Endothelial cell of umbilical vein (primary cell): ENCODE measurements at regions of chr17 and their contacts with region 1.

Region 1: DNA sequence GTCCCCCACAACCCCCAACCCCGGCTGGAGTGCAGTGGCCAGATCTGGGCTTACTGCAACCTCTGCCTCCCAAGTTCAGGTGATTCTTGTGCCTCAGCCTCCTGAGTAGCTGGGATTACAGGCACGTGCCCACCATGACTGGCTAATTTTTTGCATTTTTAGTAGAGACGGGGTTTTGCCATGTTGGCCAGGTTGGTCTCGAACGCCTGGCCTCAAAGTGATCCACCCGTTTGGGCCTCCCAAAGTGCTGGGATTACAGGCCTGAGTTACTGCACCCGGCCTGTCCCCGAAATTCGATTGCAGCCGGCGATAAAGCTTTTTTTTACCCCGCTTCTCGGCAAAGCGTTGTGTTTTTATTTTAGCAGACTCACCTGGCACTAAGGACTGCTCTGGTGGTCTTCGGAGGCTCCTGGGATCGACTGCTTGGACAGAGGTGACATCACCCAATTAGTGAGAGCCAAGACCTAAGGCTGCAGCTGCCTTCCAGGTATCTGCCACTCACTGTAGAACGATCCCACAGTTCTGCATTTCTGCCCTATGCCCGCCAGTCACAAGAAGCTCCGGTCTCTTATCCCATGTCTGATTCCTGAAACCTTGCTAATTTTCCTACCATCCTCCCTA is 82.2 kb upstream of the ARL4D start:
- DNase-seq: no peak
- H3K4me3 ChIP-seq: no peak overlapping the region
- H3K27ac ChIP-seq: no peak overlapping the region
- H3K4me1 ChIP-seq: no peaks in the 10 kb centered on the region
- H3K27me3 ChIP-seq: no peaks in the 10 kb centered on the region
- CTCF ChIP-seq: no peak
- POLR2A ChIP-seq: no peak

Region 2: GRCh38 chr17:43094129-43094835 is 222.3 kb before region 1 on chr17:
- CTCF ChIA-PET with region 1: no interaction called
- POLR2A ChIA-PET with region 1: no interaction called
- dilution Hi-C with region 1: no loop called
- intact Hi-C with region 1: no loop called
- DNase-seq: no peak
- H3K4me3 ChIP-seq: no peak overlapping the region
- H3K27ac ChIP-seq: no peak overlapping the region
- H3K4me1 ChIP-seq: no peaks in the 10 kb centered on the region
- H3K27me3 ChIP-seq: no peaks in the 10 kb centered on the region
- CTCF ChIP-seq: no peak
- POLR2A ChIP-seq: no peak

Region 3: DNA sequence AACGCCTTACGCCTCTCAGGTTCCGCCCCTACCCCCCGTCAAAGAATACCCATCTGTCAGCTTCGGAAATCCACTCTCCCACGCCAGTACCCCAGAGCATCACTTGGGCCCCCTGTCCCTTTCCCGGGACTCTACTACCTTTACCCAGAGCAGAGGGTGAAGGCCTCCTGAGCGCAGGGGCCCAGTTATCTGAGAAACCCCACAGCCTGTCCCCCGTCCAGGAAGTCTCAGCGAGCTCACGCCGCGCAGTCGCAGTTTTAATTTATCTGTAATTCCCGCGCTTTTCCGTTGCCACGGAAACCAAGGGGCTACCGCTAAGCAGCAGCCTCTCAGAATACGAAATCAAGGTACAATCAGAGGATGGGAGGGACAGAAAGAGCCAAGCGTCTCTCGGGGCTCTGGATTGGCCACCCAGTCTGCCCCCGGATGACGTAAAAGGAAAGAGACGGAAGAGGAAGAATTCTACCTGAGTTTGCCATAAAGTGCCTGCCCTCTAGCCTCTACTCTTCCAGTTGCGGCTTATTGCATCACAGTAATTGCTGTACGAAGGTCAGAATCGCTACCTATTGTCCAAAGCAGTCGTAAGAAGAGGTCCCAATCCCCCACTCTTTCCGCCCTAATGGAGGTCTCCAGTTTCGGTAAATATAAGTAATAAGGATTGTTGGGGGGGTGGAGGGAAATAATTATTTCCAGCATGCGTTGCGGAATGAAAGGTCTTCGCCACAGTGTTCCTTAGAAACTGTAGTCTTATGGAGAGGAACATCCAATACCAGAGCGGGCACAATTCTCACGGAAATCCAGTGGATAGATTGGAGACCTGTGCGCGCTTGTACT is 191.3 kb before region 1 on chr17 and contains the start of gene BRCA1:
- CTCF ChIA-PET with region 1: no interaction called
- POLR2A ChIA-PET with region 1: no interaction called
- dilution Hi-C with region 1: no loop called
- intact Hi-C with region 1: loop called (anchors 1 kb)
- DNase-seq: peak; percentile 98
- H3K4me3 ChIP-seq: peak within 1 kb of the TSS; percentile 64 to 92 (median 86)
- H3K27ac ChIP-seq: peak within 1 kb of the TSS; percentile 67
- H3K4me1 ChIP-seq: peaks cover 14% of the 10 kb centered on the region
- H3K27me3 ChIP-seq: no peaks in the 10 kb centered on the region
- CTCF ChIP-seq: no peak
- POLR2A ChIP-seq: peak; percentile 69
- total RNA-seq, gene BRCA1: 25.7 and 29.0 TPM in 2 replicates

Region 4: GRCh38 chr17:43170766-43171585 is 145.7 kb before region 1 on chr17 and contains the start of gene NBR1:
- CTCF ChIA-PET with region 1: no interaction called
- POLR2A ChIA-PET with region 1: interaction called, 22 read pairs
- dilution Hi-C with region 1: no loop called
- intact Hi-C with region 1: loop called (anchors 1 kb)
- DNase-seq: peak; percentile 99
- H3K4me3 ChIP-seq: peak within 1 kb of the TSS; percentile 47 to 75 (median 73)
- H3K27ac ChIP-seq: peak within 1 kb of the TSS; percentile 68
- H3K4me1 ChIP-seq: peaks cover 22% of the 10 kb centered on the region
- H3K27me3 ChIP-seq: no peaks in the 10 kb centered on the region
- CTCF ChIP-seq: no peak
- POLR2A ChIP-seq: peak; percentile 64
- total RNA-seq, gene NBR1: 52.1 and 57.0 TPM in 2 replicates

Region 5: DNA sequence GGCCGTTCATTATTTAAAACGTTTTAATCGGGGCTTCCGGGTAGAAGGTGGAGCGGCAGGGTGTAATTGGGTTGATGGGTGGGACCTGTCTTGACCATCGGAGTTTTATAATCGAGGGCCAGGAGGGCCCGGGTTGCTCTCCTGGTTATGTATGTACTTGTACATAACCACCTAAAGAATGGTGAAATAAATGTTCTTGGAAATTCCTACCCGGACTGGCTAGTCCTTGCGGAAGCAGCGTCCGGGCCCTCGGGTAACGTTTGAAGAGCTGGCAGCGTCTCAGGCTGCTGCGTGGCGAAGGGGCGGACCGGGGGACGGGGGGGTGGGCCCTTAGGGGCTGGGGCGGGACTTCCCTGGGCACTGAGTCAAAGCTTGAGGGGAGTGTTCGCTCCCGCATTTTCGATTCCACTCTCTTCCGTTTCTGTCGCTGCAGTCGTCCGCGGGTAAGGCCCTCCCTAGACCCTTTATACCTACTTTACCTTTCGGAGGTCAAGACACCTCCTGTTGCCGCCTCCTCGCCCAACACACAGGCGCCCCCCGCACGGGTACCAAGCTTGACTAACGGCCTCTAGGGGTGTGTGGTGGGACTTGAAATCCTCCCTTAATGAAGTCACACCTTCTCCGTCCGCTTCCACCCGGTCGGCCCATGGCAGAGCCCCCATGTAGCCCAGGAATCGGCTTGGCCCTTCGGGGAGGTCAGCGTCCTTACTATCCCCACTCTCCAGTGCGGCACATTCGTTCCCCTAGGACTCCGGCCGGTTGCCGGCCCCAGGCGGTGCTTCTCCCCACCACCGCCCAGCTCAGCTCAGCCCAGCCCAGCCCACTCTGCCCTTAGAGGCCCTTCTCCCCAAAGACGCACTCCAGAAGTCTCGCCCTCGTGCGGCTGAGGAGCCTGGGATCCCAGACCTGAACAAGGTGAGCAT is 104.9 kb before region 1 on chr17 and contains the start of gene TMEM106A:
- CTCF ChIA-PET with region 1: interaction called, 9 read pairs
- POLR2A ChIA-PET with region 1: interaction called, 43 read pairs
- dilution Hi-C with region 1: no loop called
- intact Hi-C with region 1: no loop called
- DNase-seq: peak; percentile 87
- H3K4me3 ChIP-seq: peak within 1 kb of the TSS; percentile 72 to 79 (median 75)
- H3K27ac ChIP-seq: peak within 1 kb of the TSS; percentile 72
- H3K4me1 ChIP-seq: peaks cover 16% of the 10 kb centered on the region
- H3K27me3 ChIP-seq: no peaks in the 10 kb centered on the region
- CTCF ChIP-seq: peak in 1 of 2 donors; percentile 47
- POLR2A ChIP-seq: peak; percentile 96
- total RNA-seq, gene TMEM106A: 11.5 and 14.8 TPM in 2 replicates

Region 6: GRCh38 chr17:43217614-43218087 is 99.0 kb before region 1 on chr17:
- CTCF ChIA-PET with region 1: interaction called, 9 read pairs
- POLR2A ChIA-PET with region 1: interaction called, 43 read pairs
- dilution Hi-C with region 1: no loop called
- intact Hi-C with region 1: no loop called
- DNase-seq: no peak
- H3K4me3 ChIP-seq: no peak overlapping the region
- H3K27ac ChIP-seq: no peak overlapping the region
- H3K4me1 ChIP-seq: peaks cover 5% of the 10 kb centered on the region
- H3K27me3 ChIP-seq: no peaks in the 10 kb centered on the region
- CTCF ChIP-seq: no peak
- POLR2A ChIP-seq: no peak

Region 7: GRCh38 chr17:43360739-43361505 is 44.3 kb after region 1 on chr17:
- CTCF ChIA-PET with region 1: no interaction called
- POLR2A ChIA-PET with region 1: interaction called, 50 read pairs
- dilution Hi-C with region 1: no loop called
- intact Hi-C with region 1: no loop called
- DNase-seq: peak; percentile 97
- H3K4me3 ChIP-seq: peak overlapping the region in 2 of 3 experiments; percentile 40 to 86
- H3K27ac ChIP-seq: peak overlapping the region; percentile 99
- H3K4me1 ChIP-seq: peaks cover 10% of the 10 kb centered on the region
- H3K27me3 ChIP-seq: no peaks in the 10 kb centered on the region
- CTCF ChIP-seq: no peak
- POLR2A ChIP-seq: peak; percentile 100

Region 8: DNA sequence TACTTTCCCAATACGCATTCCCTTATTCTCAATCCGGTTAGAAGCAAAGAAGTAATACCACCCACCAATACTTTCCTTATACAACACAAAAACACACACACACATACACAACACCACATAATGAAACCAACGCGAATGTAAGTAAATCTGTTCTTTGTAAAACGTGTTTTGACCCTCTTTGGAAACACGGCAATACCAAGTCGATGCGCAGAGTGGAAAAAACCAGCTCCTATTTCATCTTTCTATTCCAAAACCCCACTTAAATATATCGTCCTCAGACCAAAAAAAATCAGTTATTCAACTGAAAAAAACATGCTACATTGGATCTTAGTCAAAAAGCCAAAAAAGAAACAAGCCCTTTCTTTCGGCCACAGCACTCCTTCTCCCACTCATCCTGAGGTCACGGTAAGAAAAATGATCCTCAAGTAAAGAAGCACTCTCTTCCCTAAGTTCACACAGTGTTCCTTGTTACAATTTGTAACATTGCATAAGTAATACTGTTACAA is 51.2 kb after region 1 on chr17:
- CTCF ChIA-PET with region 1: interaction called, 3 read pairs
- POLR2A ChIA-PET with region 1: interaction called, 33 read pairs
- dilution Hi-C with region 1: no loop called
- intact Hi-C with region 1: no loop called
- DNase-seq: no peak
- H3K4me3 ChIP-seq: peak overlapping the region in 1 of 3 experiments; percentile 16
- H3K27ac ChIP-seq: peak overlapping the region; percentile 98
- H3K4me1 ChIP-seq: peaks cover 15% of the 10 kb centered on the region
- H3K27me3 ChIP-seq: no peaks in the 10 kb centered on the region
- CTCF ChIP-seq: no peak
- POLR2A ChIP-seq: peak; percentile 100